CD4-positive, alpha-beta memory T cell (primary cell): ENCODE measurements at regions of chr13 and their contacts with region 1.

Region 1: DNA sequence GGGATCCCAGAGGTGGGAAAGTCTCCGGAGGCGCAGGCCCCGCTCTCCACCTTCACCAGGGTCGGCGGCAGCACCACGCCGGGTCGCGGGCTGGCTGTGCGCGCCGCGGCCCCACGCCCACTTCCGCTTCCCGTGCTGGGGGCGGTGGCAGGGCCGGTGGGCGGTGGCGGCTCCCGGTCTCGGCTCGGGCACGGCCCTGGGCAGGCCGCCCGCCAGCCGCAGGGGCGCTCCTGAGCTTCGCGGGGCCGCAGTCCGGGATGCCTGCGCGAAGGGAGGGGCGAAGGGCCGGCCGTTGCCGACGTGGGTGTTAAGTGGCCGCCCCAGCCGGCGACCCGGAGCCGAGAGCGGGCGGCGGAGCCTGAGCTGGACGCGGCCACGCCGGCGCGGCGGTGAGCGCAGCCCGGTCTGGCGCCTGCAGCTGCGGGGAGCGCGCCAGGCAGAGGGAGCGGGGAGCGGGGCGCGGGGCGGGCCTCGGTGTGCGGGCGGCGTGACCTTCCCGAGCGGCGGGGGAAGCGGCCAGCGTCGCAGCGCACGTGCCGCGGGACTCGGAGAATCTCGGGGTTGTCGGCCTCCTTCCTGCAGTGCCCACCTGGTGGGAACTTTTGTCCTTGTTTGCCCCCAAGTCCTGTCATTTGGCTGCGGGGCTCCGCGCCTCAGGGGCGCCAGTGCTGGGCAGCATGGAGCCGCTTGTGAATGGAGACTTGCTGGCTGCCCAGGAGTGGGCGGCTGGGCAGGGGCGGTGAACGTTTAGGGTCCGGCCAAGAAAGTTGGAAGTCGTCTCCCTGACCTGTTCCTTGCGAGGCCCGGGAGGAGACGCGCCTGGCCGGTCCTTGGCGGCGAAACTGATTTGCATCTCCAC is at the start of gene SLC25A15:
- DNase-seq: peak; percentile 62 to 80 (median 72)
- H3K4me3 ChIP-seq: peak within 1 kb of the TSS; percentile 17 to 63
- H3K4me3 Mint-ChIP-seq: peak within 1 kb of the TSS; percentile 81 to 89 (median 83)
- H3K27ac ChIP-seq: peak within 1 kb of the TSS; percentile 56
- H3K27ac Mint-ChIP-seq: peak within 1 kb of the TSS; percentile 64 to 94 (median 85)
- H3K4me1 ChIP-seq: peaks cover 7% of the 10 kb centered on the region
- H3K4me1 Mint-ChIP-seq: peaks cover 12 to 39% (median 24%) of the 10 kb centered on the region in 4 donors
- H3K27me3 ChIP-seq: no peaks in the 10 kb centered on the region
- H3K27me3 Mint-ChIP-seq: no peaks in the 10 kb centered on the region
- total RNA-seq, gene SLC25A15: 7.9 to 8.5 TPM

Region 2: GRCh38 chr13:40275636-40276035 is 513.9 kb before region 1 on chr13:
- CTCF ChIA-PET with region 1: no interaction called
- POLR2A ChIA-PET with region 1: no interaction called
- intact Hi-C with region 1: no loop called
- DNase-seq: no peak
- H3K4me3 ChIP-seq: no peak overlapping the region
- H3K4me3 Mint-ChIP-seq: peak overlapping the region in 1 of 8 donors; percentile 54
- H3K27ac ChIP-seq: no peak overlapping the region
- H3K27ac Mint-ChIP-seq: peak overlapping the region in 3 of 7 donors; percentile 10 to 67 (median 58)
- H3K4me1 ChIP-seq: peaks cover 22% of the 10 kb centered on the region
- H3K4me1 Mint-ChIP-seq: peaks cover 17 to 20% (median 18%) of the 10 kb centered on the region in 4 donors
- H3K27me3 ChIP-seq: no peaks in the 10 kb centered on the region
- H3K27me3 Mint-ChIP-seq: no peaks in the 10 kb centered on the region

Region 3: DNA sequence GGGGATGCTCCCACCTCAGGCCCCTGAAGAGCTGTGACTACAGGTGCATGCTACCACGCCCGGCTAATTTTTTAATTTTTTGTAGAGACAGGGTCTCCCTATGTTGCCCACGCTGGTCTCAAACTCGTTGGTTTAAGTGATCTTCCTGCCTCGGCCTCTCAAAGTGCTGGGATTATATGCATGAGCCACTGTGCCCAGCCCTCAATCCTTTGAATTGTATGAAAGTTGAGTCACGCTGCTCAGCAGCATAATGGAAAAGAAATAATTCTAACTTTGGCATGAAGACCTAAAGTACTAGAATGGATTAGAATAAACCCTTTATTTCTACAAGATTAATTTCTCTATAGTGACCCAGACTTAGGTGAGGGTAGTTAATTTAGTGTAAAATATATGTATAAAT is 60.9 kb before region 1 on chr13:
- CTCF ChIA-PET with region 1: no interaction called
- POLR2A ChIA-PET with region 1: no interaction called
- intact Hi-C with region 1: no loop called
- DNase-seq: no peak
- H3K4me3 ChIP-seq: no peak overlapping the region
- H3K4me3 Mint-ChIP-seq: no peak overlapping the region
- H3K27ac ChIP-seq: no peak overlapping the region
- H3K27ac Mint-ChIP-seq: no peak overlapping the region
- H3K4me1 ChIP-seq: no peaks in the 10 kb centered on the region
- H3K4me1 Mint-ChIP-seq: peaks cover 0 to 9% (median 5%) of the 10 kb centered on the region in 4 donors
- H3K27me3 ChIP-seq: no peaks in the 10 kb centered on the region
- H3K27me3 Mint-ChIP-seq: no peaks in the 10 kb centered on the region

Region 4: GRCh38 chr13:40770934-40771618 is 18.4 kb before region 1 on chr13 and contains the start of gene MRPS31:
- CTCF ChIA-PET with region 1: no interaction called
- POLR2A ChIA-PET with region 1: interaction called, 10 read pairs
- intact Hi-C with region 1: loop called (anchors 2 kb)
- DNase-seq: peak; percentile 91 to 92 (median 92)
- H3K4me3 ChIP-seq: peak within 1 kb of the TSS; percentile 53 to 97
- H3K4me3 Mint-ChIP-seq: peak within 1 kb of the TSS; percentile 97 to 100 (median 99)
- H3K27ac ChIP-seq: peak within 1 kb of the TSS; percentile 79
- H3K27ac Mint-ChIP-seq: peak within 1 kb of the TSS in 6 of 7 donors; percentile 98 to 100 (median 99)
- H3K4me1 ChIP-seq: peaks cover 28% of the 10 kb centered on the region
- H3K4me1 Mint-ChIP-seq: peaks cover 8 to 33% (median 27%) of the 10 kb centered on the region in 4 donors
- H3K27me3 ChIP-seq: no peaks in the 10 kb centered on the region
- H3K27me3 Mint-ChIP-seq: no peaks in the 10 kb centered on the region
- total RNA-seq, gene MRPS31: 37.7 to 39.5 TPM